ENCODE measurements at regions of chr17 and their contacts with region 1.

Region 1: GRCh38 chr17:39980351-39981206 is at the start of gene PSMD3:
- DNase-seq: peak; percentile 98 to 100 (median 99)
- H3K4me3 ChIP-seq: peak within 1 kb of the TSS; percentile 55 to 100 (median 98)
- H3K27ac ChIP-seq: peak within 1 kb of the TSS; percentile 44 to 97 (median 91)
- H3K27me3 ChIP-seq: no peaks in the 10 kb centered on the region
- CTCF ChIP-seq: peak; percentile 69 to 95 (median 86)
- total RNA-seq, gene PSMD3: 70.5 to 136 (median 98.5) TPM

Region 2: GRCh38 chr17:39952680-39953470 is 27.7 kb before region 1 on chr17:
- intact Hi-C with region 1: loop called in 1 of 2 experiments (anchors 2 kb)
- DNase-seq: peak; percentile 87 to 96 (median 92)
- H3K4me3 ChIP-seq: peak overlapping the region; percentile 32 to 76 (median 61)
- H3K27ac ChIP-seq: peak overlapping the region in 55 of 59 donors; percentile 17 to 89 (median 77)
- H3K27me3 ChIP-seq: no peaks in the 10 kb centered on the region
- CTCF ChIP-seq: peak in 4 of 56 donors; percentile 10 to 21 (median 14)

Region 3: GRCh38 chr17:39963829-39964228 is 16.8 kb before region 1 on chr17:
- intact Hi-C with region 1: loop called (anchors 1 to 2 kb)
- DNase-seq: no peak
- H3K4me3 ChIP-seq: no peak overlapping the region
- H3K27ac ChIP-seq: no peak overlapping the region
- H3K27me3 ChIP-seq: no peaks in the 10 kb centered on the region
- CTCF ChIP-seq: no peak

Region 4: GRCh38 chr17:39996800-39997199 is 16.2 kb after region 1 on chr17:
- intact Hi-C with region 1: no loop called
- DNase-seq: no peak
- H3K4me3 ChIP-seq: no peak overlapping the region
- H3K27ac ChIP-seq: peak overlapping the region in 2 of 59 donors; percentile 10 to 12
- H3K27me3 ChIP-seq: no peaks in the 10 kb centered on the region
- CTCF ChIP-seq: no peak

Measured in dorsolateral prefrontal cortex (tissue), 120 donors.